Activated CD4-positive, alpha-beta memory T cell treated with anti-CD3 and anti-CD28 coated beads for 36 hours (primary cell): ENCODE measurements at regions of chr2 and their contacts with region 1.

Region 1: GRCh38 chr2:10122386-10123280 is at the start of gene RRM2:
- DNase-seq: peak; percentile 97
- H3K4me3 Mint-ChIP-seq: peak within 1 kb of the TSS; percentile 97
- H3K27ac Mint-ChIP-seq: peak within 1 kb of the TSS; percentile 97
- H3K4me1 Mint-ChIP-seq: peaks cover 49% of the 10 kb centered on the region
- H3K27me3 Mint-ChIP-seq: peaks cover 3% of the 10 kb centered on the region
- total RNA-seq, gene RRM2: 523 to 528 TPM

Region 2: GRCh38 chr2:9555297-9556141 is 567.1 kb before region 1 on chr2 and contains the start of gene ADAM17:
- CTCF ChIA-PET with region 1: no interaction called
- POLR2A ChIA-PET with region 1: no interaction called
- intact Hi-C with region 1: loop called (anchors 2 kb)
- DNase-seq: peak; percentile 93
- H3K4me3 Mint-ChIP-seq: peak within 1 kb of the TSS; percentile 100
- H3K27ac Mint-ChIP-seq: peak within 1 kb of the TSS; percentile 98
- H3K4me1 Mint-ChIP-seq: peaks cover 50% of the 10 kb centered on the region
- H3K27me3 Mint-ChIP-seq: no peaks in the 10 kb centered on the region
- total RNA-seq, gene ADAM17: 24.0 to 24.7 TPM

Region 3: DNA sequence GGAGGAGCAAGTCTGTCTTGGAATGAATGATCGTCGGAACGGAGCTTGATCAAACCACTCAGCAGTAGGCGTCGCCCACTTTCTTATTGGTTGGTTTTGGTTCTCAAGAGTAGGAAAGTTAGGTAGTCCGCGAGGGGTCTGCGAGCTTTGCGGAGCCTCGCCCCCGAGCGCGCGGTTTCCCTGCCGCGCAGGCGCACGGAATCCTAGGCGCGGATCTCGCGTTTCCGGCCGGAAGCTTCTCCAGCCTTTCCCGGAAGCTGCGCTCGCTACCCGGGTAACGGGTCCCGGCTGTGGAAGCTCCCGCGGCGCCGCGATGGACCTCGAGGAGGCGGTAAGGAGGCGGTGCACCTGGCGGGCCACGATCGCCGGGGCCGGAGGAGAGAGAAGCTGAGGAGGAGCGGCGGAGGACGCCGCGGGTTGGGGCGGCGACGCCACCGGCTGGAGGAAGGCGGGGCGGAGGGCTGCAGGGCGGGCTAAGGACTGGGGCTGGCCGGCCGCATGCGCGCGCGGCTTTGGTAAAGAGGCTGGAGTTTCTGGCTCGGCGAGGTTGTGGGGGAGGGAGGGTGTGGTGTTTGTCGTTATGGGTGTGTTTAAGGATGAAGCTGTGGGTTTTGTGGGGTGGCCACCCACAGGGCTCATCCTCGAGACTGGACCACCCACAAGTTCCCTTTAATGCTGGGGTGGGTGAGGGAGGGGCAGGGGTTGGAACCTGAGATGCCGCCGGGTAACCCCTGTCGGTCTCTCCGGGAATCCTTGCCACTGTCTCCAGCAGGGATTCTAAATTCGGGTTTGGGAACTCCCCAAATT is 279.2 kb before region 1 on chr2 and contains the start of gene TAF1B:
- CTCF ChIA-PET with region 1: no interaction called
- POLR2A ChIA-PET with region 1: no interaction called
- intact Hi-C with region 1: loop called (anchors 1 kb)
- DNase-seq: peak; percentile 92
- H3K4me3 Mint-ChIP-seq: peak within 1 kb of the TSS; percentile 91
- H3K27ac Mint-ChIP-seq: peak within 1 kb of the TSS; percentile 89
- H3K4me1 Mint-ChIP-seq: peaks cover 42% of the 10 kb centered on the region
- H3K27me3 Mint-ChIP-seq: no peaks in the 10 kb centered on the region
- total RNA-seq, gene TAF1B: 32.6 TPM

Region 4: GRCh38 chr2:10097352-10098148 is 25.1 kb before region 1 on chr2:
- CTCF ChIA-PET with region 1: interaction called, 12 read pairs
- POLR2A ChIA-PET with region 1: interaction called, 3 read pairs
- intact Hi-C with region 1: no loop called
- DNase-seq: peak; percentile 50
- H3K4me3 Mint-ChIP-seq: no peak overlapping the region
- H3K27ac Mint-ChIP-seq: no peak overlapping the region
- H3K4me1 Mint-ChIP-seq: no peaks in the 10 kb centered on the region
- H3K27me3 Mint-ChIP-seq: peaks cover 21% of the 10 kb centered on the region

Region 5: DNA sequence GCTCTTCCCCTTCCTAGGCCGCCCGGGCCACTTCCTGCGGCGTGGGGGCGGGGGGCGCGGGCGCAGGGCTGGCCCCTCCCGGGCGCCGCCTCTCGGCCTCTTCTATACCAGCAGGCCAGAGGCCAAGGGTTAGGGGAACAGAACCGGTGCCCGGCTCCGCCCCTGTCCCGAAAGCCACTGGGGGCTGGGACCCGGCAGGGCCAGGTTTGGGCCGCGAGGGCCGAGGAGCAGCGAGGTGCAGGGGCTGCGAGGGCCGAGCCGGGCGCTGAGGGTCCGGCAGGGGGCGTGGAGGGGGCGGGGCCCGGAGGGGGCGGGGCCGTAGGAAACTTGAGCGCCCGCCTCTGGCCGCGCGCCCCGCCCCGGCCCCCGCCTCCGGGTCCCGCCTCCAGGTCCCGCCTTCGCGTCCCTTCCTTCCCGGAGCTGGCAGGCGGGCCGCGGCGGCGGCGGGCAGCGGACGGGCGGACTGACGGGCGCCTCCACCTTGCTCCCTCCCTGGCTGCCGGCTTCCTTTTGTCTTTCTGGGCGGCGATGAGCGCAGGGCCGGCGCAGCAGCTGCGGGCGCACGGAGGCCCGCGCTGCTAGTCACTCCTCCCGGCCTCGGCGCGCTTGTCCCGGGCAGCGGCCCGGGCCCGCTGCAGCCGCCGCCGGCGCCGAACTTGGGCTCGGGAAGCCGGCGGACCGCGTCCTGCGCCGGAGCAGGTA is 180.0 kb after region 1 on chr2 and contains the start of gene HPCAL1:
- CTCF ChIA-PET with region 1: interaction called, 4 read pairs
- POLR2A ChIA-PET with region 1: interaction called, 3 read pairs
- intact Hi-C with region 1: loop called (anchors 1 kb)
- DNase-seq: peak; percentile 88
- H3K4me3 Mint-ChIP-seq: peak within 1 kb of the TSS; percentile 99
- H3K27ac Mint-ChIP-seq: peak within 1 kb of the TSS; percentile 83
- H3K4me1 Mint-ChIP-seq: peaks cover 72% of the 10 kb centered on the region
- H3K27me3 Mint-ChIP-seq: no peaks in the 10 kb centered on the region
- total RNA-seq, gene HPCAL1: 82.2 to 82.6 TPM

Region 6: GRCh38 chr2:10448208-10448645 is 325.6 kb after region 1 on chr2 and contains the start of gene ODC1:
- CTCF ChIA-PET with region 1: interaction called, 5 read pairs
- POLR2A ChIA-PET with region 1: interaction called, 19 read pairs
- intact Hi-C with region 1: loop called (anchors 1 kb)
- DNase-seq: peak; percentile 95
- H3K4me3 Mint-ChIP-seq: peak within 1 kb of the TSS; percentile 83
- H3K27ac Mint-ChIP-seq: peak within 1 kb of the TSS; percentile 88
- H3K4me1 Mint-ChIP-seq: peaks cover 50% of the 10 kb centered on the region
- H3K27me3 Mint-ChIP-seq: no peaks in the 10 kb centered on the region
- total RNA-seq, gene ODC1: 138 to 142 TPM

Region 7: GRCh38 chr2:10790228-10790979 is 667.8 kb after region 1 on chr2:
- CTCF ChIA-PET with region 1: no interaction called
- POLR2A ChIA-PET with region 1: no interaction called
- intact Hi-C with region 1: loop called (anchors 5 kb)
- DNase-seq: peak; percentile 70
- H3K4me3 Mint-ChIP-seq: peak overlapping the region; percentile 54
- H3K27ac Mint-ChIP-seq: peak overlapping the region; percentile 84
- H3K4me1 Mint-ChIP-seq: peaks cover 38% of the 10 kb centered on the region
- H3K27me3 Mint-ChIP-seq: no peaks in the 10 kb centered on the region